Right cardiac atrium (tissue), 5 donors: ENCODE measurements at regions of chr6 and their contacts with region 1.

Region 1: DNA sequence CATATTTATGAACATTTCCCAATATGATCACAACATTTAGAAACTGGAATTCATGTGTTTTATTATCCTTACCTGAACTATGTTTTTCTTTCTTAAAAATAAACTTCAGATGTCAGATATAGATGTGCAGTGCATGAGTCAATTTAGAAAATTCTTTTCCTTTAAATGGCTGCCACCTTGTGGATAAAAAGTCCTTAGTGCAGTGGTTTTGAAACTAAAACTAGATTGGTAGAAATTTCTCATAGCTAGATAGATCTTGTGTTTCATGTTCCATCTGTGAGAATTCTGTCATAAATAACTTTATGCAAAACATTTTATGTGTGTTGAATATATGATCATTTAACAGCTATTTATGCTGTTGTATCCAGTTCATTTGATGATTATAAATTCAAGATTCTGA is 134.9 kb downstream of the KLHL32 start:
- DNase-seq: no peak
- ATAC-seq: no peak
- H3K4me3 ChIP-seq: no peak overlapping the region
- H3K27ac ChIP-seq: no peak overlapping the region
- H3K4me1 ChIP-seq: no peaks in the 10 kb centered on the region
- H3K27me3 ChIP-seq: no peaks in the 10 kb centered on the region

Region 2: GRCh38 chr6:96340164-96340563 is 719.3 kb before region 1 on chr6:
- intact Hi-C with region 1: no loop called
- DNase-seq: no peak
- ATAC-seq: no peak
- H3K4me3 ChIP-seq: no peak overlapping the region
- H3K27ac ChIP-seq: no peak overlapping the region
- H3K4me1 ChIP-seq: no peaks in the 10 kb centered on the region
- H3K27me3 ChIP-seq: no peaks in the 10 kb centered on the region

Region 3: DNA sequence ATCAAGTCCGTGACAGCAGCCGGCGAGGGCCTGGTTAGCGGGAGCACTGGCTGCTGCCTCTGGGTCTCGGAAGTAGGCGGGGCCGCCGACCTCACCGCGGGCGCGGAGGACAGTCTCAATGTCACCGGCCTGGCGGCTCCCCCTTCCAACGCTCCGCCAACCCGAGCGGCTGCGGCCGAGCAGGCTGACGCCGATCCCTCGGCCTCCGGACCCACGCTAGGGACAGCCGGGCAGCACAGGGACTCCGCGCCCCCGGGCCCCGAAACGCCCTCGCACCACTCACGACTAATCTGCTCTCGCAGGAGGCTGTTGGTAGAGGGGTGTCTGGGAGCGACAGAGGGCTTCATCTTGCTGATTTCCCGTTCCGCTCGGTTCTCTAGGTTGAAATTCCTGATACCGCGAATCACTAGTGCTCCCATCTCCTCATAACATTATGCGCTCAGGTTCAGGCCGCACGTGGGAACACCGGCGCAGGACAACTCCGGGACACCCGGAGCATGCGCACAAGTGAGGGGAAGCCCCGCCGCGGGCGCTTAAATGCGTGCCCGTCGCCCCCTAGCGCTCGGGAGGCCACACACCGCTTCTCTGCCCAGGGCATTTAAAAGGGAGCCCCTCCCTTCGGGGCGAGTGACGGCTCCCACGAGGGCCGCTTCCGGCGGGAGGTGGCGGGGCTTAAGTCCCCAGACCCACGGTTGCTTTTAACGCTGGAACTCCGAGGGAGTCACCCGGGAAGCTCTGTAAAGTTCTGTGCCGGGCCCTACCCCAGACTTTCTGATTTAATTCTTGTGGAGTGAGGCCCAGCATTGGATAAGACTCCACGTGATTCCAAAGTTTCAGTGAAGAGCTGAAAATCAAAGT is 161.9 kb before region 1 on chr6 and contains the start of gene NDUFAF4:
- intact Hi-C with region 1: loop called in 3 of 4 experiments (anchors 2 to 5 kb)
- DNase-seq: peak; percentile 97 to 98 (median 98)
- ATAC-seq: peak; percentile 99
- H3K4me3 ChIP-seq: peak within 1 kb of the TSS; percentile 78
- H3K27ac ChIP-seq: peak within 1 kb of the TSS; percentile 92
- H3K4me1 ChIP-seq: no peaks in the 10 kb centered on the region
- H3K27me3 ChIP-seq: no peaks in the 10 kb centered on the region
- total RNA-seq, gene NDUFAF4: 73.8 to 104 (median 91.4) TPM